ENCODE measurements at regions of chr17 and their contacts with region 1.

Region 1: DNA sequence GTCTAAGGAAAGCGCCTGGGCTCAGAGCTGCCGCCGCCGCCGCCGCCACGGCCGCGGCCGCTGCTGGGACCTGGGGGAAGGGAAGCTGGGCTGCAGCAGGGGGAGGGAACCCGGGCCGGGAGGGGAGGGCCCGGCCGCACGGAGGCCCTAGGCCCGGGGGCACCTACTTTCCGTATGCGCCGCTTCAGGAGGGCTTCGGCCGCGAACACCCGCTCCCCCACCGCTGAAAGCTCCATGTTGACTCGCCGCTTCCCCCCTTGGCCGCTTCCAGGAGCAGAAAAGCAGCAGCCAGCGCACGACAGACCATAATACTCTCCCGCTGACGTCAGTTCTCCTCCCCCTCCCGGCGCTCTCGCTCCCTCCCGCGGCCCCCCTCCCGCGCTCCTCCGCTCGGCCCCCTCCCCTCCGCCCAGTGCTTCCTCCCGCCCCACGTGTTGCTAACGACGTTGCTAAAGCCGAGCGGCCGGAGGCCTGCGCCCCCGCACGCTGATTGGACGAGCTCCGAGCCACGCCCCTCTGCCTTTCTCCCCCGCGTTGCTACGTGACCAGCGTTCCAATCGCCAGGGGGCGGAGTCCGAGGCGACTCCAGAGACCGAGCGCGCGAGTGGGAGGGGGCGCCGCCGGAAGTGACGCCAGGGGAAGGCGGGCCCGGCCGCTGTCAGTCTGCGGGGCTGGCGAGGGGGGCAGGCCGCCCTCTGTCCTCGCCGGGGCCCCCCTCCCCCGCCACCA is at the start of gene CBX8:
- DNase-seq: peak; percentile 93 to 99
- H3K4me3 ChIP-seq: peak within 1 kb of the TSS; percentile 73
- H3K27ac ChIP-seq: 0 out of 2 replicates have a peak within 1 kb of the TSS, but pooled peaks have one; percentile 32
- H3K4me1 ChIP-seq: peaks cover 10% of the 10 kb centered on the region; the same call in 1 of the 2 replicates
- H3K27me3 ChIP-seq: peaks cover 15% of the 10 kb centered on the region; the same call in 1 of the 2 replicates
- CTCF ChIP-seq: no peak
- total RNA-seq, gene CBX8: 14.2 and 15.5 TPM in 2 replicates

Region 2: GRCh38 chr17:79658811-79659207 is 138.1 kb before region 1 on chr17:
- CTCF ChIA-PET with region 1: no interaction called
- POLR2A ChIA-PET with region 1: no interaction called
- intact Hi-C with region 1: no loop called
- DNase-seq: no peak
- H3K4me3 ChIP-seq: no peak overlapping the region
- H3K27ac ChIP-seq: no peak overlapping the region
- H3K4me1 ChIP-seq: no peaks in the 10 kb centered on the region
- H3K27me3 ChIP-seq: peaks cover 78% of the 10 kb centered on the region
- CTCF ChIP-seq: peak; percentile 52; the same call in 1 of the 2 replicates

Region 3: DNA sequence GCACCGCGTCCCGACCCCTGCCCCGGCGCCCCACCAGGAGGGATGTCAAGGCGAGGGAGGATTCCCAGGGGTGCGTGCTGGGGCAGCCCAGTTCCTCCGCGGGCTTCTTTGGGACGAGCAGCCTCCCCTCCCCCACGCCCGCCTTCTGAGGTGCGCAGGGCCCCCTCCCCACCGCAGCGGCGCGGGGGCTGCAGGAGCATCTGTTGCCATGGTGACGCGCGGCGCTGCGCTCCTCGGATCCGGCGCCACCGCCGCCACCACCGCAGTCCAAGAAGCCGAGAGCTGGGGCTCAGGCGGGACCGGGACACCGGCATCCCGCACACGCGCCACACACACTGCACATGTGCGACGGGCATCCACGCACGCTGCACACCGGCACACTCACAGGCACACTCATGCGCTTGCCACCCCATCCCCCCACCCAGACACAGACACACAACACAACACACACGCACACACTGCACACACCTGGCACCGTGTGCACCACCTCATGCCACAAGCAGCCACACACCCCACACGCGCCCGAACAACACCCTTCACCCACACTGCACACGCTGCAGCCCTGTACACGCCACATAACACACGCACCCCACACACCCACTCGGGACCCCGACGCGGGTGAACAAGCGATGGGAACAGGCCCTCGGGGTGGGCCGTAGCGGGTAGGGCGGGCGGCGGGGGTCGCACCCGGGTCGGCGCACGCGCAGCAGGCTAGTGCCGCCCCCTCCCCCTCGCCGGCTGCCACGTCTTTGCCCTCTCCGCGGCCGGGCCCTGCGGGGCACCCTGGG is 49.2 kb before region 1 on chr17:
- CTCF ChIA-PET with region 1: interaction called, 11 read pairs
- POLR2A ChIA-PET with region 1: no interaction called
- intact Hi-C with region 1: no loop called
- DNase-seq: no peak
- H3K4me3 ChIP-seq: no peak overlapping the region
- H3K27ac ChIP-seq: no peak overlapping the region
- H3K4me1 ChIP-seq: peaks cover 32% of the 10 kb centered on the region
- H3K27me3 ChIP-seq: no peaks in the 10 kb centered on the region
- CTCF ChIP-seq: no peak

Region 4: GRCh38 chr17:79777116-79777893 is 19.6 kb before region 1 on chr17:
- CTCF ChIA-PET with region 1: interaction called, 21 read pairs
- POLR2A ChIA-PET with region 1: interaction called, 3 read pairs
- intact Hi-C with region 1: no loop called
- DNase-seq: peak in 1 of 2 experiments; percentile 77
- H3K4me3 ChIP-seq: peak overlapping the region; percentile 68; the same call in 1 of the 2 replicates
- H3K27ac ChIP-seq: no peak overlapping the region
- H3K4me1 ChIP-seq: peaks cover 19% of the 10 kb centered on the region
- H3K27me3 ChIP-seq: no peaks in the 10 kb centered on the region
- CTCF ChIP-seq: no peak; the same call in 1 of the 2 replicates

Region 5: GRCh38 chr17:79831367-79832210 is 34.7 kb after region 1 on chr17:
- CTCF ChIA-PET with region 1: no interaction called
- POLR2A ChIA-PET with region 1: interaction called, 22 read pairs
- intact Hi-C with region 1: loop called (anchors 1 kb)
- DNase-seq: peak in 1 of 2 experiments; percentile 79
- H3K4me3 ChIP-seq: peak overlapping the region; percentile 68
- H3K27ac ChIP-seq: peak overlapping the region; percentile 82
- H3K4me1 ChIP-seq: peaks cover 36% of the 10 kb centered on the region
- H3K27me3 ChIP-seq: no peaks in the 10 kb centered on the region
- CTCF ChIP-seq: no peak

Region 6: GRCh38 chr17:79874329-79874981 is 77.5 kb after region 1 on chr17:
- CTCF ChIA-PET with region 1: no interaction called
- POLR2A ChIA-PET with region 1: no interaction called
- intact Hi-C with region 1: no loop called
- DNase-seq: no peak
- H3K4me3 ChIP-seq: no peak overlapping the region
- H3K27ac ChIP-seq: no peak overlapping the region
- H3K4me1 ChIP-seq: no peaks in the 10 kb centered on the region
- H3K27me3 ChIP-seq: no peaks in the 10 kb centered on the region
- CTCF ChIP-seq: peak; percentile 57; the same call in 1 of the 2 replicates

Region 7: GRCh38 chr17:79915850-79916430 is 119.0 kb after region 1 on chr17:
- CTCF ChIA-PET with region 1: interaction called, 3 read pairs
- POLR2A ChIA-PET with region 1: no interaction called
- intact Hi-C with region 1: loop called (anchors 2 kb)
- DNase-seq: peak; percentile 87 to 97
- H3K4me3 ChIP-seq: no peak overlapping the region
- H3K27ac ChIP-seq: no peak overlapping the region
- H3K4me1 ChIP-seq: peaks cover 42% of the 10 kb centered on the region
- H3K27me3 ChIP-seq: no peaks in the 10 kb centered on the region
- CTCF ChIP-seq: peak; percentile 64

Region 8: GRCh38 chr17:80169784-80170500 is 373.0 kb after region 1 on chr17 and contains the start of gene CARD14:
- CTCF ChIA-PET with region 1: no interaction called
- POLR2A ChIA-PET with region 1: interaction called, 27 read pairs
- intact Hi-C with region 1: no loop called
- DNase-seq: peak; percentile 76 to 83
- H3K4me3 ChIP-seq: peak within 1 kb of the TSS; percentile 50; the same call in 1 of the 2 replicates
- H3K27ac ChIP-seq: no peak within 1 kb of the TSS
- H3K4me1 ChIP-seq: peaks cover 13% of the 10 kb centered on the region
- H3K27me3 ChIP-seq: no peaks in the 10 kb centered on the region
- CTCF ChIP-seq: no peak
- total RNA-seq, gene CARD14: 15.7 and 16.5 TPM in 2 replicates

Measured in PC-9 (cell line).